Dorsolateral prefrontal cortex (tissue), 120 donors: ENCODE measurements at regions of chr10 and their contacts with region 1.

Region 1: GRCh38 chr10:63521416-63522276 is 445 bp downstream of the REEP3 start:
- DNase-seq: peak; percentile 57 to 82 (median 77)
- H3K4me3 ChIP-seq: peak overlapping the region; percentile 56 to 92 (median 79)
- H3K27ac ChIP-seq: peak overlapping the region; percentile 92 to 100 (median 98)
- H3K27me3 ChIP-seq: no peaks in the 10 kb centered on the region
- CTCF ChIP-seq: peak in 8 of 56 donors; percentile 5 to 31 (median 10)

Region 2: GRCh38 chr10:63206997-63207811 is 314.4 kb before region 1 on chr10:
- intact Hi-C with region 1: loop called in 1 of 2 experiments (anchors 10 kb)
- DNase-seq: peak in 2 of 10 donors; percentile 22 to 47
- H3K4me3 ChIP-seq: peak overlapping the region in 51 of 59 donors; percentile 5 to 61 (median 30)
- H3K27ac ChIP-seq: peak overlapping the region; percentile 14 to 85 (median 71)
- H3K27me3 ChIP-seq: no peaks in the 10 kb centered on the region
- CTCF ChIP-seq: peak in 7 of 56 donors; percentile 7 to 19 (median 8)

Region 3: DNA sequence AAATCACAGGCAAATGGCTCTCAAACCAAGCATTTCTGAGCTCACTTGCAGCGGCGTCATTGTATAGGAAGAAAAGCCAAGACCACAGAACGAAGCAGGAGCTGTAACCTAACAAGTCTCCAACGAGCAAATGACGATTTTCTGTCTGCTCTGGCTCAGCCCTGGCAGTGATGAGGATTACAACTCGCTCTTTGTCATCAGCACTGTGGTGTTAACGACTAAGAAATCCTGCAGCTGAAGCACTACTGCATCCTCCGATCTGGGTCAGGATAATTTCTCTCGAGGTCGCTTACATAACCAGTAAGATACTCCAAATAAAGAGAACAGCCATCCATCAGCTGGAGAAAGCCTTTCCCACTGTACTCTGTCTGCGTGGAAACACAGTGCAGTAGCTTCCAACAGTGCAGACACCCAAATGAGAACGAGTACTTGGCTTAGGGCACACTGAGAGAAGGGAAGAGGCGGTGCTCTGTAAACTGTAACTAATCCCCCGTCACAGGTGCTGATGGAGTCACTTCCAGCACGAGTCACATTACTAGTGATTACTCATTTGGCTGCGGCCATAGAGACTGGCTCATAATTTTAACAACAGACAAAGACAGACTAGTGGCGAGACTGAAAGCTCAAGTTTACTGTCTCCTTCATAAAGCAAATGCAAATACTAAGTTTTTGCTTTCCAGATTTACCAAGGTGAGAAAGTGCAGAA is 252.7 kb before region 1 on chr10:
- intact Hi-C with region 1: loop called in 1 of 2 experiments (anchors 5 kb)
- DNase-seq: peak in 9 of 10 donors; percentile 53 to 88 (median 67)
- H3K4me3 ChIP-seq: peak overlapping the region; percentile 36 to 76 (median 60)
- H3K27ac ChIP-seq: peak overlapping the region; percentile 45 to 97 (median 92)
- H3K27me3 ChIP-seq: no peaks in the 10 kb centered on the region
- CTCF ChIP-seq: peak in 45 of 56 donors; percentile 10 to 61 (median 35)

Region 4: GRCh38 chr10:63465293-63466143 is 56.1 kb before region 1 on chr10 and contains the start of gene JMJD1C:
- intact Hi-C with region 1: loop called (anchors 1 to 2 kb)
- DNase-seq: peak; percentile 44 to 81 (median 58)
- H3K4me3 ChIP-seq: peak within 1 kb of the TSS; percentile 67 to 98 (median 84)
- H3K27ac ChIP-seq: peak within 1 kb of the TSS; percentile 53 to 97 (median 90)
- H3K27me3 ChIP-seq: no peaks in the 10 kb centered on the region
- CTCF ChIP-seq: peak in 26 of 56 donors; percentile 3 to 41 (median 10)
- total RNA-seq, gene JMJD1C: 80.5 to 152 (median 104) TPM

Region 5: DNA sequence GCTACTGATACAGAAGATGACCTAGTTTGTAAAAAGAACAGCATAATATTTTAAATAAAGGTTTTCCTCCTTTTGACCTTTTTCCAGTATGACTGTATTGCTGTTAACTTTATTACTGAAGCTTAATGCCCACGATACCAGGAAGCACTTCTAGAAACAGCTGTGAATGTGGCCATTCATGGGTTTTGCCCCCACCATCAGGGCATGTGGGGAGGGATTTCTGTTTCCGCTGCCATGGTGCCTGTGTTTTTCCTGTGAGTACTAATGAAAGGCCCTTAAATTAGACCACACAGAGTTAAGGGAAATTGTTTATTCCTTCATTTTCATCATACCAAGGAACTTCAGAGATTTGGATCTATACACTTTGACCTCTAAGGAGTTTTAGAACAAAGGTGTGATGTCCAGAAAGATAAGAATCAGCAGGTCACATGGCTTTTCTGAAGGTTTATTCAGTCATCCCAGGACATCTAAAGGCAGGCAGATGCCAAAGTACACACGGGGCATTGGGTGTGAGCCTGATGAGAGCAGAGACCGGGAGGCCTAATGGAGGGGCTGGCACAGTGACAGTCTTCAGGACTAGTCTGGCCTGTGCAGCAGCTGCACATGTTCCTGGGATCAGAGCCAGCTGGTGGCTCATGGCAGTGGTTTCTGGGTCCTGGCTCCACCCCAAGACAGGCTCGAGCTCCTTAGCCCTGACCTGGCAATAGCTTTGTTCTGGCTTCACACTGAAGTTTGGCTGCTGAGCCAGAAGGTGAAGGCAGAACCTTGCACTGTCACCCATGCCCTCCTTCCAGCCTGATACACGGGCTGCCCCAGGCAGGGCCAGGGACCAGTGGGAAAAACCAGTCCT is 190.4 kb after region 1 on chr10:
- intact Hi-C with region 1: loop called in 1 of 2 experiments (anchors 10 kb)
- DNase-seq: peak; percentile 43 to 79 (median 70)
- H3K4me3 ChIP-seq: peak overlapping the region in 2 of 59 donors; percentile 12 to 36
- H3K27ac ChIP-seq: peak overlapping the region in 54 of 59 donors; percentile 8 to 87 (median 68)
- H3K27me3 ChIP-seq: no peaks in the 10 kb centered on the region
- CTCF ChIP-seq: no peak

Region 6: GRCh38 chr10:63720072-63720537 is 198.5 kb after region 1 on chr10:
- intact Hi-C with region 1: loop called (anchors 5 to 10 kb)
- DNase-seq: peak in 2 of 10 donors; percentile 46 to 53
- H3K4me3 ChIP-seq: peak overlapping the region in 7 of 59 donors; percentile 3 to 50 (median 17)
- H3K27ac ChIP-seq: peak overlapping the region in 4 of 59 donors; percentile 0 to 57 (median 48)
- H3K27me3 ChIP-seq: no peaks in the 10 kb centered on the region
- CTCF ChIP-seq: peak; percentile 91 to 100 (median 98)

Region 7: DNA sequence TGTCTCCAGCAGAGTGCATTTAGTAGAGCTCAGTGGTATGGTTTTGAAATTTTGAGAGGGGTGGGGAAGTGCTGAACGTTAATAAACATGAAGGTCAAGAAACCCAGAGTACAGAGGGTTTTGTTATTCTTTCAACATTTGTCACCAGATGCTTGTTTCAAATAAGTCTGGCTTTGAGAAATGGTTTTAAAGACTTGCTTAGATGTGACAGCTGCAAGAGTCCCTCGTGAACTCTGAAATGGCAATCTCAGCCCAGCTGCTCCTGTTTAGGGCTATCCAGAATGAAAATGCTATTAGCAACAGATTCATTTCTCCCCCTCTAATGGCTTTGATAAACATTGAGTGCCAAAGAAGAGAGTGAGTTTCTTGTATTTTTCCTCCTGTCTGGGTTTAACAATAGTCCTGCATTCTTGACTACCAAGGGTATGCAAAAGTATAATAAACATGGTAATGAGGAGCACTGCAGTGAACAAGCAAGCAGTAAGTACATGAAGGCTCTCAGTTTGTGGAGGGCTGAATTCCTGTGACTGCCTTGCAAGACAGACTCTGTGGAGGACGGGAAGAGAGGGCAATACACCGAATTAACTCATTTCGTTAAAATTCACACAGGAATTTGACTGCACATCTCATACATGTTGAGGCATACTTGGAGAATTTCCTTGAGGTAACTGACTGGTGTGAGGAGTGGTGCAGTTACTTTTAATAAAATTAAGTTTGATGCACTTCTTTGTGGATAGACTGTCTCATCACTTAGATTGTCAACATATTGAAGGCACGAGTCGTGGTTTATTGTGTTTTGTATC is 490.5 kb after region 1 on chr10:
- intact Hi-C with region 1: no loop called
- DNase-seq: no peak
- H3K4me3 ChIP-seq: no peak overlapping the region
- H3K27ac ChIP-seq: no peak overlapping the region
- H3K27me3 ChIP-seq: peaks cover 0 to 2% (median 0%) of the 10 kb centered on the region in 45 donors
- CTCF ChIP-seq: no peak